CD4-positive, alpha-beta memory T cell (primary cell): ENCODE measurements at regions of chr1 and their contacts with region 1.

Region 1: GRCh38 chr1:205416322-205416721 is 5.5 kb downstream of the LEMD1 start:
- DNase-seq: no peak
- H3K4me3 ChIP-seq: no peak overlapping the region
- H3K4me3 Mint-ChIP-seq: no peak overlapping the region
- H3K27ac ChIP-seq: no peak overlapping the region
- H3K27ac Mint-ChIP-seq: no peak overlapping the region
- H3K4me1 ChIP-seq: no peaks in the 10 kb centered on the region
- H3K4me1 Mint-ChIP-seq: no peaks in the 10 kb centered on the region
- H3K27me3 ChIP-seq: peaks cover 4% of the 10 kb centered on the region
- H3K27me3 Mint-ChIP-seq: peaks cover 3 to 5% of the 10 kb centered on the region in 2 donors

Region 2: GRCh38 chr1:205430696-205431305 is 14.5 kb after region 1 on chr1:
- CTCF ChIA-PET with region 1: interaction called, 12 read pairs
- POLR2A ChIA-PET with region 1: no interaction called
- intact Hi-C with region 1: no loop called
- DNase-seq: peak; percentile 46 to 69 (median 53)
- H3K4me3 ChIP-seq: peak overlapping the region; percentile 41 to 55
- H3K4me3 Mint-ChIP-seq: peak overlapping the region; percentile 81 to 91 (median 84)
- H3K27ac ChIP-seq: no peak overlapping the region
- H3K27ac Mint-ChIP-seq: peak overlapping the region in 5 of 7 donors; percentile 34 to 83 (median 59)
- H3K4me1 ChIP-seq: peaks cover 10% of the 10 kb centered on the region
- H3K4me1 Mint-ChIP-seq: peaks cover 8 to 17% (median 13%) of the 10 kb centered on the region in 4 donors
- H3K27me3 ChIP-seq: no peaks in the 10 kb centered on the region
- H3K27me3 Mint-ChIP-seq: peaks cover 10 to 11% of the 10 kb centered on the region in 2 donors